Activated B cell treated with CpG ODN at 0.5 μM for 24 hours (primary cell): ENCODE measurements at regions of chr5 and their contacts with region 1.

Region 1: GRCh38 chr5:124102486-124102885 is 590.5 kb downstream of the CSNK1G3 start:
- DNase-seq: no peak
- ATAC-seq: no peak
- H3K4me3 Mint-ChIP-seq: no peak overlapping the region
- H3K27ac Mint-ChIP-seq: no peak overlapping the region
- H3K4me1 Mint-ChIP-seq: no peaks in the 10 kb centered on the region
- H3K27me3 Mint-ChIP-seq: no peaks in the 10 kb centered on the region
- CTCF ChIP-seq: no peak

Region 2: GRCh38 chr5:123545506-123545905 is 557.0 kb before region 1 on chr5:
- CTCF ChIA-PET with region 1: no interaction called
- POLR2A ChIA-PET with region 1: no interaction called
- intact Hi-C with region 1: no loop called
- DNase-seq: no peak
- ATAC-seq: no peak
- H3K4me3 Mint-ChIP-seq: no peak overlapping the region
- H3K27ac Mint-ChIP-seq: no peak overlapping the region
- H3K4me1 Mint-ChIP-seq: peaks cover 76% of the 10 kb centered on the region
- H3K27me3 Mint-ChIP-seq: no peaks in the 10 kb centered on the region
- CTCF ChIP-seq: no peak

Region 3: DNA sequence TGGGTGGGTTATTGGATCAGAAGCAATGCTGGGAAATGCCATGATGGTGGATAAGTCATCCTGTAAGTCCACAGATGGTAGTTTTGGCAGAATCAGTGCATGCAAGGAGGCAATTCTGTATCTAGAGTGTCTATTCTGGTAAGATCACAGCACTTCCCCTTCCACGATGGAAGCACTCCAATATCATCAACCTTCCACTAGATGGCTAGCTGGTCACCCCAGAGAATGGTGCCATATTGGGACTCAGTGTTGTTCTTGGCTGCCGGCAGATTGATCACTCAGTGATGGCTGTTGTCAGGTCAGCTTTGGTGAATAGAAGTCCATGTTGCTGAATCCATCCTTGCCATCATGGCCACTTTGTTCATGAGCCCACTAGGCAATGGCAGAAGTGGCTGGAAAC is 37.0 kb before region 1 on chr5:
- CTCF ChIA-PET with region 1: no interaction called
- POLR2A ChIA-PET with region 1: no interaction called
- intact Hi-C with region 1: loop called (anchors 5 kb)
- DNase-seq: no peak
- ATAC-seq: no peak
- H3K4me3 Mint-ChIP-seq: no peak overlapping the region
- H3K27ac Mint-ChIP-seq: no peak overlapping the region
- H3K4me1 Mint-ChIP-seq: peaks cover 2% of the 10 kb centered on the region
- H3K27me3 Mint-ChIP-seq: no peaks in the 10 kb centered on the region
- CTCF ChIP-seq: no peak